ENCODE measurements at regions of chr12 and their contacts with region 1.

Region 1: GRCh38 chr12:92505254-92506231 is 197.2 kb upstream of the PLEKHG7 start:
- DNase-seq: peak; percentile 83
- H3K4me3 Mint-ChIP-seq: peak overlapping the region; percentile 89
- H3K27ac Mint-ChIP-seq: peak overlapping the region; percentile 98
- H3K4me1 Mint-ChIP-seq: peaks cover 42% of the 10 kb centered on the region
- H3K27me3 Mint-ChIP-seq: no peaks in the 10 kb centered on the region

Region 2: DNA sequence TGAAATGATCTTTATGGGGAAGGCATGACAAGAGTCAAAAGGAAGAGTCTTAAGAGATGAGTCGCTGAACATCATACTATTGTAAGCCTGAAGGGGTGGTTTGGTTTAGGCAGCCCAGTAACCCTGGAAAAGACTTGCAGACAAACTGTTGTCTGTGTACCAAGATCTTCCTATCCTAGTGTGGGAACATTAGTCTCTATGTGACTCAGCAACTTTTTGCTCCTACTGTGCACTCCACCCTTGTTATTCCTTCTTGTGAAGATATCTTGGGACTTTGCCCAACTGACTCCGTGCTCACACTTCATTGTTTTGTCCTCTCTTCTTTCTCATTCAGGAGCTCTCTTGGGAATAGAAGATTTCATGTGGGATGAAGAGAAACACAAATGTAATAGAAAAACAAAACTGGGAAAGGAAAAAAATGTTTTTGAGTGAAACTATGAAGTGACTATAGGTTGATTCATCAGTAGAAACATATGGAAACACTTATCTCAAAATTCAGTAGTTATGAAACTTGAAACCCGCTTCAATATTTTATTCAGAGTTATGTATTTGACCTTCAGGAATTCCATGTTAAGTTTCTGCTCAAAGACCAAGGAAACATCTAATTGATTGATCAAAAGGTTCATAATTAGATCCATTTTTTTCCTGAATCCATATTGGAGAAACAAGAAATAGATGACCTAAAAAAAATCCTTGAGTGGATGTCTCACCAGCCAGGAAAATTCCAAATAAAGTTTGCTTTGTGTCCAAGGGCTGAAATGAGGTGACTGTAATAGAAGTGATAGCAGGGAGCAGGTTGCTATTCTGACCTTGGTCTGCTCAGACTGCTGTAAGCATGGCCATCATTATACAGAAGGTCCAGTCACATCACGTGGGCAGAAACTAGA is 427.1 kb before region 1 on chr12:
- intact Hi-C with region 1: loop called (anchors 1 kb)
- DNase-seq: no peak
- H3K4me3 Mint-ChIP-seq: peak overlapping the region; percentile 7
- H3K27ac Mint-ChIP-seq: peak overlapping the region; percentile 82
- H3K4me1 Mint-ChIP-seq: peaks cover 43% of the 10 kb centered on the region
- H3K27me3 Mint-ChIP-seq: no peaks in the 10 kb centered on the region

Region 3: GRCh38 chr12:92462049-92462448 is 43.5 kb before region 1 on chr12:
- intact Hi-C with region 1: loop called (anchors 5 kb)
- DNase-seq: no peak
- H3K4me3 Mint-ChIP-seq: no peak overlapping the region
- H3K27ac Mint-ChIP-seq: no peak overlapping the region
- H3K4me1 Mint-ChIP-seq: peaks cover 11% of the 10 kb centered on the region
- H3K27me3 Mint-ChIP-seq: no peaks in the 10 kb centered on the region

Region 4: GRCh38 chr12:92519299-92519698 is 13.8 kb after region 1 on chr12:
- intact Hi-C with region 1: loop called (anchors 1 kb)
- DNase-seq: no peak
- H3K4me3 Mint-ChIP-seq: no peak overlapping the region
- H3K27ac Mint-ChIP-seq: no peak overlapping the region
- H3K4me1 Mint-ChIP-seq: peaks cover 27% of the 10 kb centered on the region
- H3K27me3 Mint-ChIP-seq: no peaks in the 10 kb centered on the region

Region 5: GRCh38 chr12:92551853-92552397 is 46.4 kb after region 1 on chr12:
- intact Hi-C with region 1: loop called (anchors 1 kb)
- DNase-seq: peak; percentile 71
- H3K4me3 Mint-ChIP-seq: no peak overlapping the region
- H3K27ac Mint-ChIP-seq: no peak overlapping the region
- H3K4me1 Mint-ChIP-seq: peaks cover 39% of the 10 kb centered on the region
- H3K27me3 Mint-ChIP-seq: no peaks in the 10 kb centered on the region

Measured in activated CD4-positive, alpha-beta T cell treated with anti-CD3 and anti-CD28 coated beads, Interleukin-2, amount 10 ng/mL, durations not matched to agents 24 days and 14 days (primary cell).